ENCODE measurements at regions of chr19 and their contacts with region 1.

Region 1: GRCh38 chr19:3108775-3109174 is 14.6 kb downstream of the GNA11 start:
- DNase-seq: no peak
- H3K4me3 ChIP-seq: no peak overlapping the region
- CTCF ChIP-seq: peak; percentile 87

Region 2: DNA sequence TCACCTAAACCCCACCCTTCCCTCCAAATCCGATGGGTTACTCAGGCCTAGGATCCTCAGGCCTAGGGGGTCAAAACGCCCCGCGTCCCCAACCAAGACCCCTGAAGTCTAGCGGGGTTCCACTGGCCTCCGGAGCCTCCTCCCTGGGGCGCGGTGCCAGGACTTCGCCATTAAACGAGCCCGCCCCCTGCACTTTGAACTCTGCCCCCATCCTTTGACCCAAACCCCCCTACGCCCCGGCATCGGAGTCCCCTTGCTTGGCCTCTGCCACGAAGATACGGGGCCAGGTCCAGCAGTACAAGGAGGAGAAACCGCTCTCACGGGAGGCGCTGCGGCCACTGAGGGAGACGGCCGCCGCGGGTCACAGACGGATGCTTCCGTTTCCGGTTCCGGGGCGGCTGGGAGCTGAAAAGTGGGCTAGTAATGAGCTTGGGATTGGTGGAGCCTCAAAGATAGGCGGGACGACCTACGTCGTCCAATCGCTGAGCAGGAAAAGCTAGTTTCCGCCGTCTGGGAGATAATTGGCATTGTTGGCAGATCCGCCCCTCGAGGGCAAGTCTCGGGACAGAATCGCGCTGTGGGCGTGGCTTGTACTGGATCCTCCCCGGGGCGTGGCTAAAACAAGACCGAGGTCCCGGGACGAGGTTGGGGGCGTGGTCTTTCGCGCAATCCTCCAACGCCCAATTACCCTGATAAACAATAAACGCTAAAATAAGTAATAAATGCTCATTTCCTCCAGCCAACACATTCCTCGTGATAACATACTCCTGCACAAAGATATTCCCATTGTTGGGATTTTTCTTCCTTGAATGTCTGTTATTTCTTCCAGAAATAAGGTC is 158.3 kb before region 1 on chr19:
- CTCF ChIA-PET with region 1: interaction called, 25 read pairs
- POLR2A ChIA-PET with region 1: no interaction called
- DNase-seq: peak; percentile 95
- H3K4me3 ChIP-seq: peak overlapping the region; percentile 94
- CTCF ChIP-seq: no peak

Region 3: DNA sequence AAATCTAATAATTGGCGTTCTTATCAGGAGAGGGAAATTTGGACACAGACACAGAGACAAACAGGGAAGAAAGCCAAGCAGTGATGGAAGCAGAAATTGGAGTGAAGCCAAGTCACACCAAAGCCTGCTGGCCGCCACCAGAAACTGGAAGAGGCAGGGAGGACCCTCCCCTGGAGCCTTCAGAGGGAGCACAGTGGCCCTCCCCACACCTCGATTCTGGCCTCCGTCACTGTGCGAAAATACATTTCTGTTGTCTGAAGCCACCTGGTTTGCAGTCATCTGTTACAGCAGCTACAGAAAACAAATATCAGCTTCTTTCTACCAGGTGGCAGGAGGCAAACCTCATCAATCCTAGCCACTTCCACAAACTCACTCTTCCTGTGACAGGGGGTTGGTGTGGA is 139.7 kb before region 1 on chr19:
- CTCF ChIA-PET with region 1: interaction called, 13 read pairs
- POLR2A ChIA-PET with region 1: no interaction called
- DNase-seq: no peak
- H3K4me3 ChIP-seq: no peak overlapping the region
- CTCF ChIP-seq: no peak

Region 4: GRCh38 chr19:3075895-3076431 is 32.8 kb before region 1 on chr19:
- CTCF ChIA-PET with region 1: interaction called, 11 read pairs
- POLR2A ChIA-PET with region 1: interaction called, 3 read pairs
- DNase-seq: no peak
- H3K4me3 ChIP-seq: peak overlapping the region; percentile 42
- CTCF ChIP-seq: peak; percentile 93

Region 5: DNA sequence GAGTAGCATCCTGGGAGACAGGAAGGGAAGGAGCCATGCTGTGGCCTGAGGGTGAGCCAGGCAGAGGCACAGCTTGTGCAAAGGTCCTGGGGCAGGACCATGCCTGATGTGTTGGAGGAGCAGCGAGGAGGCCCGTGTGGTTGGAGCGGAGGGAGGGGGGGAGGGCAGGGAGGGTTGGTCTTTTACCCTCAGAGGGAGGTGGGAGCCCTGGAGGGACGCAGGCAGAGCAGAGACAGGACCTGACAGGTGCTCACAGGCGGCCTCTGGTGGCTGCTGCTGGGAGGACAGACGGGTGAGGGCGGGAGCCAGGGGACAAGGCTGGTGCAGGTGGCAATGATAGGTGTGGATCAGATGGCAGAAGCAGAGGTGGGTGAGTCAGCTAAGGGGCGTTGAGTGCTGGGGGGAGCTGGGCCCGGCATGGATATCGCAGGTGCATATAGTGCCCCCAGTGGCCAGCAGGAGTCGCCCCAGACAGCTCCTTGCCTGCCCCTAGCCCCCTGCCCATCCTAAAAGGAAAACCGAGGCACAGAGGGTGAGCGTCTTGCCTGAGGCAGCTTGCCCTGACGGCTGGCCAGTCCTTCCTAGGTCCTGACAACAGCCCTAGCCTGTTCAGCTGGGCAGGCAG is 17.2 kb after region 1 on chr19:
- CTCF ChIA-PET with region 1: interaction called, 35 read pairs
- POLR2A ChIA-PET with region 1: no interaction called
- DNase-seq: no peak
- H3K4me3 ChIP-seq: no peak overlapping the region
- CTCF ChIP-seq: peak; percentile 62

Region 6: DNA sequence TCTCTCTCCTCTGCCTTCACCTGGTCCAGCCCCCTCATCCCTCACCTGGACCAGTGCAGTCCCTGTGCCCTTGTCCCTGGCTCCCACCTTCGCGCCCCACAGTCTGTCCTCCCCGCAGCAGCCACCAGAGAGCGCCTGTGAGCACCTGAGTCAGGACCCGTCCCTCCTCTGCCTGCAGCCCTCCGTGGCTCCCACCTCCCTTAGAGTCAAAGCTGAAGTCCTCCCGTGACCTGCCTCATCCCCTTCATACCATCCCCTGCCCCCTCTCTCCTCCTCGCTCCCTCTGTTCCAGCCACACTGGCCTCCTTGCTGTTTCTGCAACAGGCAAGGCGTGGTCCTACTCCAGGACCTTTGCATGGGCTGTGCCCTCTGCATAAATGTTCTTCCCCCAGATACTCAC is 126.0 kb after region 1 on chr19:
- CTCF ChIA-PET with region 1: no interaction called
- POLR2A ChIA-PET with region 1: no interaction called
- DNase-seq: no peak
- H3K4me3 ChIP-seq: no peak overlapping the region
- CTCF ChIP-seq: no peak